MCF 10A (cell line): ENCODE measurements at regions of chrX and their contacts with region 1.

Region 1: DNA sequence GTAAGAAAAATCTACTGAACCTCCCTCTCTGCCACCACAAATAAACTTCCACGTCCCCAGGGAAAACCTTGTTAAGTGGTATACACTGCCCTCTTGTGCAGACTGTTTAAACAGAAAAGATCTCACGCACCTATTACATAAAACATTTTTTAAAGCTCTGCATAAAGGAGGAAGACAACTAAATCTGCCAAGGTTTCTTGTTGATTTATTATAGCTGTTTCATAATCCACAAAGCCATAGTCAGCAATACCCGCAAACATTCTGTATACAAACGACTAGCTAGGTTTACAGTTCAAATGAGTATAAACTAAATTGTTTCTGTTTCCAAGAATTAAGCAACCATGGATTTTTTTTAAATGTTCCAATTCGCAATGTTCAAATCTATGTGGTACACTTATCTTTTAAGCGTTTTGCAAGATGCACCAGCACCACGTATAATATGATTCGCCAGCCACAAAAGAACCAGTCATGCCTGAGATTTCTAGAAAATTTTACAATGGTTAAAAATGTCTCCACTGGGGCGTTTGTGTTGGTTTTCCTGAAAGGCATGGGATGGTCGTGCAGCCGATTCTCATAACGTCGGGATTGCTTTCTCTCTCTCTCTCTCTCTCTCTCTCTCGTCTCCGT is 164.6 kb downstream of the PRKX start:
- DNase-seq: peak; percentile 71
- H3K4me3 Mint-ChIP-seq: peak overlapping the region; percentile 45
- H3K27ac Mint-ChIP-seq: no peak overlapping the region
- H3K4me1 Mint-ChIP-seq: peaks cover 35% of the 10 kb centered on the region
- H3K27me3 Mint-ChIP-seq: no peaks in the 10 kb centered on the region
- CTCF ChIP-seq: peak; percentile 49

Region 2: GRCh38 chrX:3037218-3037617 is 511.7 kb before region 1 on chrX:
- CTCF ChIA-PET with region 1: interaction called, 10 read pairs
- POLR2A ChIA-PET with region 1: interaction called, 7 read pairs
- intact Hi-C with region 1: loop called (anchors 5 kb)
- DNase-seq: no peak
- H3K4me3 Mint-ChIP-seq: no peak overlapping the region
- H3K27ac Mint-ChIP-seq: no peak overlapping the region
- H3K4me1 Mint-ChIP-seq: no peaks in the 10 kb centered on the region
- H3K27me3 Mint-ChIP-seq: peaks cover 21% of the 10 kb centered on the region
- CTCF ChIP-seq: no peak

Region 3: DNA sequence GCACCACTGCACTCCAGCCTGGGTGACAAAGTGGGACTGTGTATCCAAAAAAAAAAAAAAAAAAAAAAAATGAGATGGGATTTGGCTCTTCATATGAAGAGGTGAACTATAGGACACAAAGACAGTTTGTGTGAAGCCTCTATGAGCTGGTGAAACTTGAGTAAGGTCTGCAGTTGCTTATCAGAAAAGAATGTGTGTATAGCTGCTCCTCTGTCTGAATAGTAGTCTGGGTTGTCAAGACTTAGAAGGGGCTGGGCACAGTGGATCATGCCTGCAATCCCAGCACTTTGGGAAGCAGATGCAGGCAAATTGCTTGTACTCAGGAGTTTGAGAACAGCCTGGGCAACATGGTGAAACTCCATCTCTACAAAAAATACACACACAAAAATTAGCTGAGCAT is 424.8 kb before region 1 on chrX:
- CTCF ChIA-PET with region 1: interaction called, 77 read pairs
- POLR2A ChIA-PET with region 1: interaction called, 11 read pairs
- intact Hi-C with region 1: no loop called
- DNase-seq: no peak
- H3K4me3 Mint-ChIP-seq: no peak overlapping the region
- H3K27ac Mint-ChIP-seq: no peak overlapping the region
- H3K4me1 Mint-ChIP-seq: peaks cover 4% of the 10 kb centered on the region
- H3K27me3 Mint-ChIP-seq: no peaks in the 10 kb centered on the region
- CTCF ChIP-seq: no peak

Region 4: GRCh38 chrX:3176439-3176820 is 372.4 kb before region 1 on chrX:
- CTCF ChIA-PET with region 1: interaction called, 17 read pairs
- POLR2A ChIA-PET with region 1: interaction called, 3 read pairs
- intact Hi-C with region 1: no loop called
- DNase-seq: no peak
- H3K4me3 Mint-ChIP-seq: peak overlapping the region; percentile 55
- H3K27ac Mint-ChIP-seq: peak overlapping the region; percentile 84
- H3K4me1 Mint-ChIP-seq: peaks cover 25% of the 10 kb centered on the region
- H3K27me3 Mint-ChIP-seq: no peaks in the 10 kb centered on the region
- CTCF ChIP-seq: no peak

Region 5: DNA sequence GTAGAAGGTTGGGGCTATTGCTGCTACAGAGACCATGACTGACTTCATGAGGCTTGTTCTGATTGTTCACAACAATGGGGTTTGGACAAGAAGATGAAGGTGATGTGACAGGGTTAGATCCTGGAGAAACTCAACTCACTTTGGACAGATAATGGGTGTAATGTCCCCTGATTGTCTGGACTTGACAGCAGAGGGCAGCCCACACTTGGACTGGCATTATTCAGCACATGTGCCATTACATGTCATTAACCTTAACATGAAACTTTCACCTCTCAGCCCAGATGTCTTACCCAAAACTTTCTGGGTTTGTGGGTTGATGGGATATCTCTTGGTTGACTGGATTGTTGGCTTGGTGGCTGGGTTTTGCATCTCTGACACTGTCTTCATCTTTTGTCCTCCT is 303.9 kb before region 1 on chrX:
- CTCF ChIA-PET with region 1: interaction called, 18 read pairs
- POLR2A ChIA-PET with region 1: interaction called, 3 read pairs
- intact Hi-C with region 1: loop called (anchors 1 kb)
- DNase-seq: peak; percentile 49
- H3K4me3 Mint-ChIP-seq: no peak overlapping the region
- H3K27ac Mint-ChIP-seq: no peak overlapping the region
- H3K4me1 Mint-ChIP-seq: peaks cover 10% of the 10 kb centered on the region
- H3K27me3 Mint-ChIP-seq: peaks cover 32% of the 10 kb centered on the region
- CTCF ChIP-seq: peak; percentile 55

Region 6: DNA sequence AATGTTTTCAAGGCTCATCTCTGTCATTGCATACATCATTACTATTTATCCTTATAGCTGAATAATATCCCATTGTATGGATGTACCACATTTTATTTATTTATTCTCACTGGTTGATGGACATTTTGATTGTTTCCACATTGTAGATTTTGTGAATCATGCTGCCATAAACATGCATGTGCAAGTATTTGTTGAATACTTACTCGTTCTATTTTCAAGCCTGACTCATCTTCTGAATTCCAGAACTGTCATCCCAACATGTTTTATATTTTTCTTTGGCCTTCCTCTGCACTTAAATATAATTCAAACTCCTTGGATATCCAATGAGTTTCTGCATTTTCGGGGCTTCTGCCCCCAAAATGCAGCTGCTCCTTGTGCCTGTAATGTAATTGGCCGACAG is 280.0 kb before region 1 on chrX:
- CTCF ChIA-PET with region 1: interaction called, 12 read pairs
- POLR2A ChIA-PET with region 1: interaction called, 8 read pairs
- intact Hi-C with region 1: no loop called
- DNase-seq: peak; percentile 67
- H3K4me3 Mint-ChIP-seq: no peak overlapping the region
- H3K27ac Mint-ChIP-seq: peak overlapping the region; percentile 14
- H3K4me1 Mint-ChIP-seq: peaks cover 47% of the 10 kb centered on the region
- H3K27me3 Mint-ChIP-seq: no peaks in the 10 kb centered on the region
- CTCF ChIP-seq: no peak

Region 7: GRCh38 chrX:3638280-3638873 is 89.5 kb after region 1 on chrX:
- CTCF ChIA-PET with region 1: interaction called, 4 read pairs
- POLR2A ChIA-PET with region 1: no interaction called
- intact Hi-C with region 1: loop called (anchors 2 kb)
- DNase-seq: peak; percentile 72
- H3K4me3 Mint-ChIP-seq: no peak overlapping the region
- H3K27ac Mint-ChIP-seq: no peak overlapping the region
- H3K4me1 Mint-ChIP-seq: no peaks in the 10 kb centered on the region
- H3K27me3 Mint-ChIP-seq: no peaks in the 10 kb centered on the region
- CTCF ChIP-seq: peak; percentile 67